ENCODE measurements at regions of chr3 and their contacts with region 1.

Region 1: DNA sequence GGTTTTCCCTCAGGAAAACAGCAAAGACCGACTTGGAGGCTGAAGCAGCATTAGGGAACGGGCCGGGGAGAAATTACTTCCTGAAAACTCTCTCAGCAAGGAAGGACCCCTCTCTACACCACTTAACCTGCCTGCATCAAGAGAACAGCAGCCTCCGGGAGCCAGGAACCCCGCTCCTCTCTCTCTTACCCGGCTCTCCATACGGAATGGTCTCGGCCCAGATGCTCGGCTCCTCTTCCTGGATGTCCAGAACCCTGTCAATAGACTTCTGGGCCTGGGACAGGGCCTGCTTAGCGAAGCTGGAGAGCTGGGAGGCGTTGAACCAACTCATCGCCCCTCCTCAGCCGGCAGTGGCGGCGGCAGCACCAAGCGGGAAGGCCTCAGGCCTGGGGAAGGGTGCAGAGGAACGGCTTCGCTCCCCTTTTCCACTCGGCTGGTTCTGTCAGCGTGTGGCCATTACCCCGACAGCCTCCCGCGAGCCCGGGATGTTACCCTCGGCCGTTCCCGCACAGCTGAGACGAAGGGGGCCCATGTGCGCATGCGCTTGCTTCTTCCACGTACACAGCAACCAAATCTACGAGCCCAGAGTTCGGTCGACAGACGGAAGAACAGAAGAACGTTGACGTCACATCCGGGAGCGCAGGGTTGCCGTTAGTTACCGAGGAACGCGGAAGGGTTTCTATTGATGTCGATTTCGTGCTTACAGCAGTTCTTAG is at the start of gene TMF1:
- DNase-seq: peak; percentile 98
- H3K4me3 Mint-ChIP-seq: peak within 1 kb of the TSS; percentile 97
- H3K27ac Mint-ChIP-seq: peak within 1 kb of the TSS; percentile 94
- H3K4me1 Mint-ChIP-seq: peaks cover 41% of the 10 kb centered on the region
- H3K27me3 Mint-ChIP-seq: no peaks in the 10 kb centered on the region
- total RNA-seq, gene TMF1: 23.3 to 25.2 TPM

Region 2: DNA sequence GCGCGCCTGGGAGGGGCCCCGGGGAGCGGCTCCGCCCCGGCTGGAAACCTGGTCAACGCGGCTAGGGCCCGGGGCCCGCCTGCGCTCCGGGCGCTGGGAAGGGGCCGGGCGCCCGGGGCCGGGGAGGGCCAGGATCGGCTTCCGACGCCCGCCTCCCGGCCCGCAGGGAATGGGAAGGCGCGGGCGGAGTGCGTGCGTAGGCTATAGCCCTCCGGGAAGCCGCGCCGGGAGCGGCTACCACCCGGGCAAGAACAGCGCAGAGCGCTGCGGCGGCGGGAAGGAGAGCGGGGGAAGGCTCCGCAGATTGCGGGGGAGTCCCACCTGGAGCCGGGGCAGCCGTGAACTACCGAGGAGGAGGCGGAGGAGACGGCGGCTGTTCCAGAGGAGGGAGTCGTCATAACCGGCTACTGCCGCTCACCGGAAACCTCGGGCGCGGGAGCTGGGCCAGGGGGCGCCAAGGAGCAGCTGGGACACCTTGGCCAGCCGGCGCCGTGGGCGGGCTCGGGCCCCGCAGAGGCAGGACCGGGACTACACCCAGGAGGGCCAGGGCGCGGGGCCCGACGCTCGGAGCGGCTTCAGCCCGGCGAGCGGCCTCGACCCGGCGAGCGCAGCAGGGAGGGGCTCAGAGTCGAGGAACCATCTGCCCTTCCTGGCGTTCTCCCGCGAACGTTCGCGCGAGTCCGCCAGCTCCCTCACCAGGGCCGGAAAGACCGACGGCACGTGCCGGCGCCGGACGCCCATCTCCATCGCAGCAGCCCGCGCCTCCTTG is 38.5 kb before region 1 on chr3 and contains the start of gene EOGT:
- CTCF ChIA-PET with region 1: no interaction called
- intact Hi-C with region 1: loop called (anchors 1 kb)
- DNase-seq: peak; percentile 88
- H3K4me3 Mint-ChIP-seq: peak within 1 kb of the TSS; percentile 78
- H3K27ac Mint-ChIP-seq: peak within 1 kb of the TSS; percentile 73
- H3K4me1 Mint-ChIP-seq: peaks cover 15% of the 10 kb centered on the region
- H3K27me3 Mint-ChIP-seq: no peaks in the 10 kb centered on the region
- total RNA-seq, gene EOGT: 4.8 TPM

Region 3: GRCh38 chr3:69033470-69033869 is 18.4 kb before region 1 on chr3:
- CTCF ChIA-PET with region 1: no interaction called
- intact Hi-C with region 1: loop called (anchors 2 kb)
- DNase-seq: peak; percentile 28
- H3K4me3 Mint-ChIP-seq: no peak overlapping the region
- H3K27ac Mint-ChIP-seq: peak overlapping the region; percentile 30
- H3K4me1 Mint-ChIP-seq: peaks cover 8% of the 10 kb centered on the region
- H3K27me3 Mint-ChIP-seq: no peaks in the 10 kb centered on the region

Region 4: DNA sequence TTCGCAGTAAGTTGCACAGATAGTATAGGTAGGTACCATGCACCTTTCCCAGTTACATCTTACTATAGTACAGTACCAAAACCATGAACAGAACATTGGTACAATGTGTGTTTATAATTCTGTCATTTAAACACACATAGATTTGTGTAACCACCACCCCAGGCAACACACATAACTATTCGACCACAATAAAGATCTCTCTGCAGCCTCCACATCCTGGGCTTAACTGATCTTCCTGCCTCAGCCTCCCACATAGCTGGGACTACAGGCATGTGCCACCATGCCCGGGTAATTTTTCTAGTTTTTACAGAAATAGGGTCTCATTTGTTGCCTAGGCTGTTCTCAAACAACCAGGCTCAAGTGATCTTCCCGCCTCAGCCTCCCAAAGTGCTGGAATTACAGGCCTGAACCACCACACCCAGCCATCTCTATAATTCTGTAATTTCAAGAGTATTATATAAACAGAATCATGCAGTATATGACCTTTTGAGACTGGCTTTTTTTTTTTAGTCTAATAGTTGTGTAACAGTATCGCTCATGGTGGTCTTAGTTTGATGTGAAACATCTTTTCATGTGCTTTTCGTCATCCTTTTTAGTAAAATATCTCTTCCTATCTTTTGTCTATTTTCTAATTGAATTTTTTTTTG is 13.5 kb after region 1 on chr3:
- CTCF ChIA-PET with region 1: interaction called, 4 read pairs
- intact Hi-C with region 1: loop called (anchors 1 kb)
- DNase-seq: peak; percentile 14
- H3K4me3 Mint-ChIP-seq: no peak overlapping the region
- H3K27ac Mint-ChIP-seq: peak overlapping the region; percentile 65
- H3K4me1 Mint-ChIP-seq: peaks cover 33% of the 10 kb centered on the region
- H3K27me3 Mint-ChIP-seq: no peaks in the 10 kb centered on the region

Measured in activated naive CD4-positive, alpha-beta T cell treated with anti-CD3 and anti-CD28 coated beads for 36 hours (primary cell).